Activated CD4-positive, alpha-beta T cell treated with anti-CD3 and anti-CD28 coated beads for 36 hours (primary cell): ENCODE measurements at regions of chr7 and their contacts with region 1.

Region 1: GRCh38 chr7:77651573-77652162 is 44.6 kb upstream of the RSBN1L start:
- DNase-seq: peak; percentile 41
- ATAC-seq: no peak
- H3K4me3 Mint-ChIP-seq: no peak overlapping the region
- H3K27ac Mint-ChIP-seq: no peak overlapping the region
- H3K4me1 Mint-ChIP-seq: no peaks in the 10 kb centered on the region
- H3K27me3 Mint-ChIP-seq: no peaks in the 10 kb centered on the region

Region 2: DNA sequence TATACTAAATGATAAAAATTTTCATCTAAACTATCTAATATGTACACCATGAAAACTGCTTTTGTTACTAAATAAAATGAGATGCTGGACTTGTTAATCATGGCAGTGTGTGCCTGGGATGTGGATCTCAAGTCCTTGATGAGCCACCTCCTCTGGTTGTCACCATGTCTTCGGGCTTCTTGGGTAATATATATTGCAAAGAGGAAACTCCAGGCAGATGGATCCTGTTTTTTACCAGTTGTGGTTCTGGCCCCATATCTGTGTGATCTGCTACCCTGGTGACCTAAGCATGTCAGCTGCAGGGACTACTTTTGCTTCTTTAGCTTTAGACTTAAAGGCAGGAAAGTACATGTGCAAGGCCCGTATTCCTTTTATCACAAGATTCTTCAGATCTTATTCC is 100.4 kb after region 1 on chr7:
- CTCF ChIA-PET with region 1: interaction called, 40 read pairs
- POLR2A ChIA-PET with region 1: no interaction called
- intact Hi-C with region 1: no loop called
- DNase-seq: no peak
- ATAC-seq: peak; percentile 39
- H3K4me3 Mint-ChIP-seq: no peak overlapping the region
- H3K27ac Mint-ChIP-seq: peak overlapping the region; percentile 14
- H3K4me1 Mint-ChIP-seq: peaks cover 47% of the 10 kb centered on the region
- H3K27me3 Mint-ChIP-seq: no peaks in the 10 kb centered on the region

Region 3: GRCh38 chr7:77759294-77759889 is 107.7 kb after region 1 on chr7:
- CTCF ChIA-PET with region 1: interaction called, 70 read pairs
- POLR2A ChIA-PET with region 1: no interaction called
- intact Hi-C with region 1: loop called (anchors 1 kb)
- DNase-seq: peak; percentile 78
- ATAC-seq: peak; percentile 81
- H3K4me3 Mint-ChIP-seq: no peak overlapping the region
- H3K27ac Mint-ChIP-seq: no peak overlapping the region
- H3K4me1 Mint-ChIP-seq: peaks cover 31% of the 10 kb centered on the region
- H3K27me3 Mint-ChIP-seq: no peaks in the 10 kb centered on the region

Region 4: DNA sequence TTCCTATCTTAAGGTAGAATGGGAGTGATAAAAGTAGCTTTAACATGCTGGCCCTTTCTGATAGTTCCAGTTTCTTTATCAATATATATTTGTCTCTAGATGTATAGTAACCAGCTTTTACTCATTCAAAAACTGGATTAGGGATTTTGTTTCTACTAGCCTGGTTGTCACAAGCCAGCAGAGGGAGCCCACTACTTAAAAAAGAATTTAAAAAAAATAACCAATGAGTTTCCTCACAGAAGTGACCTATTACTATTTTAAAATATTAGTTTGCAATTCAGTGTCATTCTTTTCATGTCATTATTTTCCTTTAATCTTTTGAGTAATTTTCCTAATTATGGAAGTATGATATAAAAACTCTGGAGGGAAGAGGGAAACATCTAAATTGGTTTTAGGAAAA is 289.0 kb after region 1 on chr7:
- CTCF ChIA-PET with region 1: interaction called, 6 read pairs
- POLR2A ChIA-PET with region 1: no interaction called
- intact Hi-C with region 1: loop called in 1 of 2 experiments (anchors 1 kb)
- DNase-seq: peak; percentile 21
- ATAC-seq: no peak
- H3K4me3 Mint-ChIP-seq: no peak overlapping the region
- H3K27ac Mint-ChIP-seq: no peak overlapping the region
- H3K4me1 Mint-ChIP-seq: peaks cover 13% of the 10 kb centered on the region
- H3K27me3 Mint-ChIP-seq: no peaks in the 10 kb centered on the region

Region 5: GRCh38 chr7:78039790-78040776 is 388.4 kb after region 1 on chr7:
- CTCF ChIA-PET with region 1: interaction called, 22 read pairs
- POLR2A ChIA-PET with region 1: no interaction called
- intact Hi-C with region 1: loop called (anchors 1 to 5 kb)
- DNase-seq: peak; percentile 72
- ATAC-seq: peak; percentile 92
- H3K4me3 Mint-ChIP-seq: no peak overlapping the region
- H3K27ac Mint-ChIP-seq: no peak overlapping the region
- H3K4me1 Mint-ChIP-seq: no peaks in the 10 kb centered on the region
- H3K27me3 Mint-ChIP-seq: peaks cover 18% of the 10 kb centered on the region